ENCODE measurements at regions of chr1 and their contacts with region 1.

Region 1: GRCh38 chr1:228457396-228458176 is 29.6 kb upstream of the RNF187 start:
- DNase-seq: peak; percentile 61 to 95 (median 88)
- ATAC-seq: peak; percentile 88
- H3K4me3 ChIP-seq: peak overlapping the region; percentile 78
- H3K4me3 Mint-ChIP-seq: peak overlapping the region; percentile 80 to 97 (median 94)
- H3K27ac ChIP-seq: peak overlapping the region; percentile 87
- H3K27ac Mint-ChIP-seq: peak overlapping the region; percentile 93 to 99 (median 98)
- H3K4me1 ChIP-seq: peaks cover 14 to 17% of the 10 kb centered on the region in 2 donors
- H3K4me1 Mint-ChIP-seq: peaks cover 26 to 64% (median 42%) of the 10 kb centered on the region in 7 donors
- H3K27me3 ChIP-seq: no peaks in the 10 kb centered on the region
- H3K27me3 Mint-ChIP-seq: peaks cover 0 to 7% (median 2%) of the 10 kb centered on the region in 5 donors

Region 2: DNA sequence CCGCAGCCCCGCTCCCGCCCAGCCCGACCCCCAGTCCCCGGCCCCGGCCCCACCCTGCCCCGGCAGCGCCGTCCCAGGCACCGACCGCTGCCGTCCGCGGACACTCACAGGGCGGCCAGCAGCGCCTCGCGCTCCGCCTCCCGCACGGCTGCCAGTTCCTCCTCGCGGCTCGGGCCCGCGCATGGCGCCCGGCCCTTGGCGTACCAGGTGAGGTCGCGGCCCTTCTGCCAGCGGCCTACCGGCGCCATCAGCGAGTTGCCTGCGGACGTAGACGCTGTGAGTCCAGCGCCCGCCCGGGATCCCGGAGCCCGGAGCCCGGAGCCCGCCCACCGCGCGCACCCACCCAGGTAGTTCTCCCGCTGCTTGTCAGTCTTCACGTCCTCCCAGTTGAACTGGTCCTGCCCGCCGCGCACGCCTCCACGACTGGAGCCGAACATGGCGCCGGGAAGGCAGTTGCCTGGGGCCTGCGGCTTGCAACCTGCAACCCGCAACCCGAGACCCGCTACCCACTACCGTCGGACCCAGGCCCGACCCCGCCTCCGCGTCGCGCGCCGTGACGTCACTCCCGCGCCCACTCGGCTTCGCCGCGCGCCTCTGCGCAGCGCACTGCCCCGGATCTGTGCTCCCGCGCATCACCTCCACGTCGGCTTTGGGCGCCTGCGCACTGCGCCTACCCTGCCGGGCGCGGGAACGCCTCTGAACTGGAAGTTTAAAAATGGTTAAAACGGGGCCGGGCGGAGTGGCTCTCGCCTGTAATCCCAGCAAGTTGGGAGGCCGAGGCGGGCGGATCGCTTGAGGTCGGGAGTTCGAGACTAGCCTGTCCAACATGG is 354.6 kb before region 1 on chr1 and contains the start of gene C1orf35:
- CTCF ChIA-PET with region 1: no interaction called
- POLR2A ChIA-PET with region 1: interaction called, 4 read pairs
- intact Hi-C with region 1: loop called (anchors 1 to 2 kb)
- DNase-seq: peak; percentile 90 to 97 (median 93)
- ATAC-seq: peak; percentile 85
- H3K4me3 ChIP-seq: peak within 1 kb of the TSS; percentile 95
- H3K4me3 Mint-ChIP-seq: peak within 1 kb of the TSS; percentile 91 to 97 (median 93)
- H3K27ac ChIP-seq: peak within 1 kb of the TSS; percentile 94
- H3K27ac Mint-ChIP-seq: peak within 1 kb of the TSS; percentile 90 to 95 (median 94)
- H3K4me1 ChIP-seq: peaks cover 17 to 20% of the 10 kb centered on the region in 2 donors
- H3K4me1 Mint-ChIP-seq: peaks cover 6 to 43% (median 23%) of the 10 kb centered on the region in 7 donors
- H3K27me3 ChIP-seq: no peaks in the 10 kb centered on the region
- H3K27me3 Mint-ChIP-seq: no peaks in the 10 kb centered on the region
- total RNA-seq, gene C1orf35: 16.8 to 31.8 (median 27.8) TPM

Region 3: GRCh38 chr1:228139944-228140656 is 317.5 kb before region 1 on chr1 and contains the start of gene GUK1:
- CTCF ChIA-PET with region 1: no interaction called
- POLR2A ChIA-PET with region 1: no interaction called
- intact Hi-C with region 1: loop called (anchors 1 kb)
- DNase-seq: peak; percentile 98 to 100 (median 100)
- ATAC-seq: peak; percentile 93
- H3K4me3 ChIP-seq: peak within 1 kb of the TSS; percentile 88
- H3K4me3 Mint-ChIP-seq: peak within 1 kb of the TSS; percentile 87 to 99 (median 95)
- H3K27ac ChIP-seq: peak within 1 kb of the TSS; percentile 99
- H3K27ac Mint-ChIP-seq: peak within 1 kb of the TSS; percentile 83 to 100 (median 99)
- H3K4me1 ChIP-seq: peaks cover 42 to 49% of the 10 kb centered on the region in 2 donors
- H3K4me1 Mint-ChIP-seq: peaks cover 23 to 48% (median 34%) of the 10 kb centered on the region in 7 donors
- H3K27me3 ChIP-seq: no peaks in the 10 kb centered on the region
- H3K27me3 Mint-ChIP-seq: peaks cover 0 to 24% (median 0%) of the 10 kb centered on the region in 5 donors
- total RNA-seq, gene GUK1: 145 to 309 (median 279) TPM

Region 4: DNA sequence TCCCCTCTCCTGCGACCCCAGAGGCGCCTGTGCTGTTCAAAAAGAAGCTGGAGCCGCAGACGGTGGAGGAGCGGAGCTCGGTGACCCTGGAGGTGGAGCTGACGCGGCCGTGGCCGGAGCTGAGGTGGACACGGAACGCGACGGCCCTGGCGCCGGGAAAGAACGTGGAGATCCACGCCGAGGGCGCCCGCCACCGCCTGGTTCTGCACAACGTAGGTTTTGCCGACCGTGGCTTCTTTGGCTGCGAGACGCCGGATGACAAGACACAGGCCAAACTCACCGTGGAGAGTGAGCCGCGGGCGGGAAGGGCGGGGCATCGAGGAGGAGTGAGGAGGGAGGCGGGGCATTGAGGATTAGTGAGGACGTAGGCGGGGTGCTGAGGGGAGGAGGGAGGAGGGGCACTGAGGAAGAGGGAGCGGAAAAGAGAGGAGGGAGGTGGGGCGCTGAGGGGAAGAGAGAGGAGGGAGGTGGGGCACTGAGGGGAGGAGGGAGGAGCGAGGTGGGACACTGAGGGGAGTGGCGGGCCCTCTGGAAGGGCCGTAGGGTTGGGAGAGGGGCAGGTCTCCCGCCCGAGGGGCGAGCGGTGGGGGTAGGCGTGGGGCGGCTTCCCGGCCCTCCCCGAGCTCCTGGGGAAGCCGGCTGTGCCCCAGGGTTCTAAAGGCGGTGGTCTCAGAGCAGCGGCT is 181.7 kb before region 1 on chr1:
- CTCF ChIA-PET with region 1: no interaction called
- POLR2A ChIA-PET with region 1: no interaction called
- intact Hi-C with region 1: loop called (anchors 1 to 2 kb)
- DNase-seq: peak; percentile 53 to 88 (median 82)
- ATAC-seq: peak; percentile 96
- H3K4me3 ChIP-seq: peak overlapping the region; percentile 77
- H3K4me3 Mint-ChIP-seq: peak overlapping the region; percentile 71 to 88 (median 82)
- H3K27ac ChIP-seq: peak overlapping the region; percentile 77
- H3K27ac Mint-ChIP-seq: peak overlapping the region in 7 of 9 donors; percentile 21 to 73 (median 60)
- H3K4me1 ChIP-seq: no peaks in the 10 kb centered on the region
- H3K4me1 Mint-ChIP-seq: peaks cover 8 to 20% (median 19%) of the 10 kb centered on the region in 7 donors
- H3K27me3 ChIP-seq: no peaks in the 10 kb centered on the region
- H3K27me3 Mint-ChIP-seq: no peaks in the 10 kb centered on the region

Region 5: GRCh38 chr1:228416217-228416933 is 41.2 kb before region 1 on chr1 and contains the start of gene TRIM17:
- CTCF ChIA-PET with region 1: no interaction called
- POLR2A ChIA-PET with region 1: no interaction called
- intact Hi-C with region 1: loop called in 1 of 2 experiments (anchors 2 kb)
- DNase-seq: peak in 8 of 9 donors; percentile 15 to 47 (median 31)
- ATAC-seq: peak; percentile 69
- H3K4me3 ChIP-seq: peak within 1 kb of the TSS; percentile 48
- H3K4me3 Mint-ChIP-seq: peak within 1 kb of the TSS; percentile 73 to 91 (median 86)
- H3K27ac ChIP-seq: peak within 1 kb of the TSS; percentile 11
- H3K27ac Mint-ChIP-seq: peak within 1 kb of the TSS in 8 of 9 donors; percentile 24 to 76 (median 38)
- H3K4me1 ChIP-seq: peaks cover 5 to 15% of the 10 kb centered on the region in 2 donors
- H3K4me1 Mint-ChIP-seq: peaks cover 8 to 30% (median 27%) of the 10 kb centered on the region in 7 donors
- H3K27me3 ChIP-seq: no peaks in the 10 kb centered on the region
- H3K27me3 Mint-ChIP-seq: peaks cover 0 to 45% (median 10%) of the 10 kb centered on the region in 5 donors
- total RNA-seq, gene TRIM17: 0.92 to 2.5 (median 1.8) TPM

Region 6: DNA sequence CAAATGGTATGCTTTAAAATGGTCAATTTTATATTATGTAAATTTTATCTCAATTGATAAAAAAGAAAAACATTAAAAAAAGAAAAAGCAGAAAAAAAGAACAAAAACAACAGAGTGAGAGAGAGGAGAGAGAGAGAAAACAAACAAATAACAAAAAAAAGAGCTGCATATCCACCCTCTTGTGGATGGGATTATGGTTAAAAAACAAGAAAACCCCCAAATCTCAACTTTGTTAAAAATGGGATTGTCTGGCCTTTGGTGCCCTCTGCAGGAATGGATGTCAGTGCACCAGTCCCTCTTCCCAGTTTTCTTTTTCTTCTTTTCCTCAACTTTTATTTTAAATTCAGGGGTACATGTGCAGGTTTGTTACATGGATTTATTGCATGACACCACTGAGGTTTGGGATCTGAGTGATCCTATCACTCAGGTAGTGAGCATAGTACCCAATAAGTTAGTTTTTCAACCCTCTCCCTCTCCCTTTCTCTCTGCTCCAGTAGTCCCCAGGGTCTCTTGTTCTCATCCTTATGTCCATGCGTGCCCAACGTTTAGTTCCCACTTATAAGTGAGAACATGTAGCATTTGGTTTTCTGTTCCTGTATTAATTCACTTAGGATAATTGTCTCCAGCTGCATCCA is 57.7 kb after region 1 on chr1:
- CTCF ChIA-PET with region 1: no interaction called
- POLR2A ChIA-PET with region 1: interaction called, 3 read pairs
- intact Hi-C with region 1: loop called in 1 of 2 experiments (anchors 1 kb)
- DNase-seq: peak in 7 of 9 donors; percentile 14 to 57 (median 43)
- ATAC-seq: peak; percentile 67
- H3K4me3 ChIP-seq: no peak overlapping the region
- H3K4me3 Mint-ChIP-seq: no peak overlapping the region
- H3K27ac ChIP-seq: no peak overlapping the region
- H3K27ac Mint-ChIP-seq: no peak overlapping the region
- H3K4me1 ChIP-seq: peaks cover 0 to 6% of the 10 kb centered on the region in 2 donors
- H3K4me1 Mint-ChIP-seq: peaks cover 0 to 8% (median 6%) of the 10 kb centered on the region in 7 donors
- H3K27me3 ChIP-seq: no peaks in the 10 kb centered on the region
- H3K27me3 Mint-ChIP-seq: peaks cover 19 to 56% (median 42%) of the 10 kb centered on the region in 5 donors

Region 7: GRCh38 chr1:229420765-229421164 is 963.2 kb after region 1 on chr1:
- CTCF ChIA-PET with region 1: no interaction called
- POLR2A ChIA-PET with region 1: no interaction called
- intact Hi-C with region 1: no loop called
- DNase-seq: no peak
- ATAC-seq: no peak
- H3K4me3 ChIP-seq: no peak overlapping the region
- H3K4me3 Mint-ChIP-seq: no peak overlapping the region
- H3K27ac ChIP-seq: no peak overlapping the region
- H3K27ac Mint-ChIP-seq: no peak overlapping the region
- H3K4me1 ChIP-seq: no peaks in the 10 kb centered on the region
- H3K4me1 Mint-ChIP-seq: no peaks in the 10 kb centered on the region
- H3K27me3 ChIP-seq: no peaks in the 10 kb centered on the region
- H3K27me3 Mint-ChIP-seq: peaks cover 20 to 34% (median 27%) of the 10 kb centered on the region in 5 donors

Region 8: DNA sequence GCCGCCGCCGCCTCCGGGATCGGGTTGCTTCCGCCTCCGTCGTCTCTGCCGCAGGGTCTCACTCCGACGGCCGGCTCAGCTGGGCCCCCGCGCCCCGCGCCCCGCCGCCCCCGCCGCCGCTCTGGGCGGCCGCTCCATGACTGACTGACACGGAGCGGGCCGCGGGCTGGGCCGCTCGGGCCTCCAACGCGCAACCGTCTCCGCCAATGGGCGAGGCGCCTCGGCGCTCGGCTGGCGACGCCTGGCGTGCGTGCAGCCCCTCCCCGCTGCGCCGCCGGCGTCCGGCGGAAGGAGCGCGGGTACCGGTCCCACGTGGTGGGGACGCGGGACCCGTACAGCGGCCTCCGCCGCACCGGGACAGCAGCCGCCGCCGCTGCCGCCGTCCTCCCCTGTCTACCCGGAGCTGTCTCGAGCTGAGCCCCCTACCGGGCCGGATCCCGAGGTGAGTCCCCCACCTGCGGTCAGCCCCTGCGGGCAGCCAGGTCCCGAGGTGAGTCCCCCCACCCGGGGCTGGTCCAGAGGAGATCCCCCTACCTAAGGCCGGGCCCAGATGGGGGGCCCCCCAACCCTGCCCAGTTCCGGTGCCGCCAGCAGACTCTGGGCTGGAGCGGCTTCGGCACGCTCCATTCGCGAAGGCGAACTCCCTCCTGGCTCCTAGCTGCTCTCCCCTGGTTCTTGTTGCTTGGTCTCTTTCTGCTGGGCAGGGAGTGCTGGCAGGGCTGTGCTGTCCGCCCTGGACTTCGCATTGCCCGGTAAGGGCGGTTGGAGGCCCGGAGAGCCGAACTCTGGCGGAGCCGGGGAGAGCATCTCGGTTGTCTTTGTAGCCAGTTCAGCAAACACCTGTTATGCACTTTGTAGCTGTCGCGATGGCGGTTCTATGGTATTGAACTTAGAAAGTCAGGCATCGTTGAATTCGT is 1168.6 kb after region 1 on chr1 and contains the starts of genes TAF5L and URB2:
- CTCF ChIA-PET with region 1: no interaction called
- POLR2A ChIA-PET with region 1: no interaction called
- intact Hi-C with region 1: loop called in 1 of 2 experiments (anchors 5 kb)
- DNase-seq: peak; percentile 81 to 91 (median 85)
- ATAC-seq: peak; percentile 97
- H3K4me3 ChIP-seq: peak within 1 kb of the TSS; percentile 93
- H3K4me3 Mint-ChIP-seq: peak within 1 kb of the TSS; percentile 94 to 100 (median 98)
- H3K27ac ChIP-seq: peak within 1 kb of the TSS; percentile 80
- H3K27ac Mint-ChIP-seq: peak within 1 kb of the TSS; percentile 93 to 98 (median 97)
- H3K4me1 ChIP-seq: peaks cover 21 to 27% of the 10 kb centered on the region in 2 donors
- H3K4me1 Mint-ChIP-seq: peaks cover 39 to 69% (median 59%) of the 10 kb centered on the region in 7 donors
- H3K27me3 ChIP-seq: no peaks in the 10 kb centered on the region
- H3K27me3 Mint-ChIP-seq: no peaks in the 10 kb centered on the region
- total RNA-seq, gene TAF5L: 17.3 to 27.2 (median 19.8) TPM
- total RNA-seq, gene URB2: 6.2 to 18.2 (median 11.0) TPM

Measured in naive thymus-derived CD4-positive, alpha-beta T cell (primary cell).